WTC11 (cell line): ENCODE measurements at regions of chr14 and their contacts with region 1.

Region 1: DNA sequence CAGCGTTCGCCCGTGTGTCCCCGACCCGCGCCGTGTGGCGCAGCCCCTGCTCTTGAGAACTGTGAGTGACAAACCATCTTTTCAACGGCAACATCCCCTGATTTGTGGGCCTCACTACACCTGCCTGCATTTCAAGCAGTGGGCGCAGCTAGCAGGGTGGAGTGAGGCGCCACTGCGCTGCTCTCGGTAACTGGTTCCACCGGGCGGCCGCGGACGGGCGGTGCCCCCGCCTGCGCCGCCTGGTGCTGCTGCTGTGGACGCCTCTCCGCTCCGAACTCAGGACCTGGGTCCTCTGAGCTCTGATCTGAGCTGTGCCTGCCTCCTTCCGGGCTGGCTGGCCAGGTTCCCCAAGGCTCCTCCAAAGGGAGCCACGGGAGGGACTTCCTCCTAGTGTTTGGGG is 5.9 kb upstream of the DEGS2 start:
- DNase-seq: peak; percentile 60
- ATAC-seq: peak; percentile 90
- H3K4me3 Mint-ChIP-seq: peak overlapping the region; percentile 64
- H3K27ac Mint-ChIP-seq: 0 out of 2 replicates have a peak overlapping the region, but pooled peaks have one; percentile 44
- H3K4me1 Mint-ChIP-seq: peaks cover 10% of the 10 kb centered on the region
- H3K27me3 Mint-ChIP-seq: peaks cover 39% of the 10 kb centered on the region
- CTCF ChIP-seq: no peak

Region 2: DNA sequence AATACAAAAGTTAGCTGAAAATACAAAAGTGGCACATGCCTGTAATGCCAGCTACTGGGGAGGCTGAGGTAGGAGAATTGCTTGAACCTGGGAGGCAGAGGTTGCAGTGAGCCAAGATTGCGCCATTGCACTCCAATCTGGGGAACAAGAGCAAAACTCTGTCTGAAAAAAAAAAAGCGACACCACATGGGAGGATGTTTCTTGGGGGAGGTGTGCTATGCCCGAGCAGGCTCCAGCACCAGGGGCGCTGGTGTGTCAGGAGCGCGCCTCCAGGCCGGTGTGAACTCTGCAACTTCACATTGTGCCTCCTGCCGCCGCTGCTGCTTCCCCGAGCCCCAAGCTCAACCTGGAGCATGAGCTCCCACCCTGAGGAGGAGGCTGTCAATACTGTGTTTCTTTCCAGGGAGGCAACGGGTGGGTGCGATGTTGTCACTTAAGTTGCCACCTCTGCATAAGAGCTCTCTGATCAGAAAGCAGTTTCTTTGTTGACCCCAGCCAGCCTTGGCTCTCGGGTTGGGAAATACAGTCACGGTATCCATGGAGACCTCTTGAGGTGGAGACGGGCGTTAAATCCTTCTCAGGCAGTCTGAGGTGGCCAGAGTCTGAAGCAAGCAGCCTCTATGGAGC is 24.8 kb before region 1 on chr14:
- CTCF ChIA-PET with region 1: interaction called, 12 read pairs
- POLR2A ChIA-PET with region 1: no interaction called
- DNase-seq: peak; percentile 74
- ATAC-seq: peak; percentile 86
- H3K4me3 Mint-ChIP-seq: no peak overlapping the region
- H3K27ac Mint-ChIP-seq: 0 out of 2 replicates have a peak overlapping the region, but pooled peaks have one; percentile 49
- H3K4me1 Mint-ChIP-seq: peaks cover 8% of the 10 kb centered on the region
- H3K27me3 Mint-ChIP-seq: no peaks in the 10 kb centered on the region
- CTCF ChIP-seq: 0 out of 2 replicates have a peak, but pooled peaks have one; percentile 14

Region 3: DNA sequence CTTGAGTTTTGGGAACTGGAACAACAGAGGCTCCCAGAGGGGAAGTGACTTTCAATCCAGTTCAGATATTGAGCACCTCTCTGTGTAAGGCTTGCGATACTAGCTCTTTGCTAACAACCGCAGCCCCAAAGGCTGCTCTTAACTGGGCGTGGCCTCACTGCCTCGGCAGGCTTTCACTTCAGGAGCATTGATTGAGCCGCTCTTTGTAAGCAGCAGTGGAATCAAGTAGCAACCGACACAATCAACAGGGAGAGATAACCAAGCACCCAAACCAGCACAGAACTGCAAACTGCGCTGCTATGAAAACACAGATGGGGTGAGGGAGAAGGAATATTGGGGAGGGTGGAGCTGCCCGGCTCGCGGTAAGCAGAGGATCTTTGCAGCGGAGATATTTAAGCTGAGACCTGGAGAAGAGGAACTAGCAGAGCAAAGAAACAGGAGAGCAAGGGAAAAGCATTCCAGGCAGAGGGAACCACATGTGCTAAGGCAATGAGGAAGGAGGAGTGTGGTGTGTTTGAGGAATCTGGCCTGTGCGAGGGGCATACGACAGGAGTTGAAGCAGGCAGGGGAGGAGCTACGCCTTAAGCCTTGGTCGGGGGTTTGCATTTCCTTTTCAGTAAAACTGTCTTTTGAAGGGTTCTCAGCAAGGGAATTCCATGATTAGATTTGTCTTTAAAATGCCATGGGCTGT is 56.3 kb after region 1 on chr14:
- CTCF ChIA-PET with region 1: interaction called, 10 read pairs
- POLR2A ChIA-PET with region 1: no interaction called
- DNase-seq: peak; percentile 57
- ATAC-seq: peak; percentile 83
- H3K4me3 Mint-ChIP-seq: no peak overlapping the region
- H3K27ac Mint-ChIP-seq: no peak overlapping the region
- H3K4me1 Mint-ChIP-seq: peaks cover 2% of the 10 kb centered on the region; the same call in 1 of the 2 replicates
- H3K27me3 Mint-ChIP-seq: no peaks in the 10 kb centered on the region
- CTCF ChIP-seq: no peak

Region 4: DNA sequence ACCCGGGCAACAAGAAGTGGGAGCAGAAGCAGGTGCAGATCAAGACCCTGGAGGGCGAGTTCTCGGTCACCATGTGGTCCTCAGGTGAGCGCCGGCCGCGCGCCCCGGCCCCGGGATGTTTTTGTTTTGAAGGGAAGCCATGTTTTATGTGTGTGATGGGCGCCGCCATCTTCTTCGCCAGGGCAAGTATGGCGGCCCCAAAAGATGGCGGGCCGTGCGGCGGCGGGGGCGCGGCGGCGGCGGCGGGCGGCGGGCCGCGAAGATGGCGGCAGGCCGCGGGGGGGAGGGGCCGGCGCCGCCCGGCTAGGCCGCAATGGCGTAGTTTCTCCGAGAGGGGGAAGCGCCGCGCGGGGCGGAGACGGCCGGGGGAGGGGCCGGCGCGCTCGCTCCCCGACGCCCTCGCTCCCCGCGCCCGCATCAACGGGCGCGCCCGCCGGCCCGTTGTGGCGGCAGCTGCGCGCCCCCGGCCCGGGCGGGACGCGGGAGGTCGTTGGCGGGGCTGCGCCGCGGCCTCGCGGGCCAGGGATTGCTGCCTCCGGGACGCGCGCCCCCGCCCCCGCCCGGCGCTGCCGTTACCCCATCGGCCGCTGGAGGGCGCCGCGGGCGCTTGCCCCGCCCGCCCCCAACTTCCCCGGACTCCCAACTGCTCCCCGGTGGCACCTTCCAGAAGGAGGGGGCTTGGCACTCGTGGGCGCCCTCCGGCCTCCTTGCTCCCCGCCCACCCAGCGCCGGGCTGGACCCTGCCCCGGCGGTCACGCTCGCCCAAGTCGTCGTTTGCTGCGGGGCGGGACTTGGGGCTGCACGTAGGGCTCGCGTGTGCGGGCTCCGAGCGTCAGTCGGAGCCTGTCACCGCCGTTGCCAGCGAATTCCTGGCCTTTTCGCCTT is 74.7 kb after region 1 on chr14:
- CTCF ChIA-PET with region 1: no interaction called
- POLR2A ChIA-PET with region 1: no interaction called
- DNase-seq: peak; percentile 77
- ATAC-seq: peak; percentile 33
- H3K4me3 Mint-ChIP-seq: peak overlapping the region; percentile 92
- H3K27ac Mint-ChIP-seq: peak overlapping the region; percentile 88
- H3K4me1 Mint-ChIP-seq: peaks cover 43% of the 10 kb centered on the region
- H3K27me3 Mint-ChIP-seq: no peaks in the 10 kb centered on the region
- CTCF ChIP-seq: peak; percentile 79